Right ventricle myocardium inferior (tissue), 1 donor: ENCODE measurements at regions of chr15 and their contacts with region 1.

Region 1: GRCh38 chr15:91981821-91982801 is 128.6 kb downstream of the SLCO3A1 start:
- DNase-seq: no peak
- ATAC-seq: peak; percentile 7

Region 2: GRCh38 chr15:92069308-92070250 is 87.5 kb after region 1 on chr15:
- intact Hi-C with region 1: loop called (anchors 5 kb)
- DNase-seq: no peak
- ATAC-seq: peak; percentile 57